ENCODE measurements at regions of chr1 and their contacts with region 1.

Region 1: DNA sequence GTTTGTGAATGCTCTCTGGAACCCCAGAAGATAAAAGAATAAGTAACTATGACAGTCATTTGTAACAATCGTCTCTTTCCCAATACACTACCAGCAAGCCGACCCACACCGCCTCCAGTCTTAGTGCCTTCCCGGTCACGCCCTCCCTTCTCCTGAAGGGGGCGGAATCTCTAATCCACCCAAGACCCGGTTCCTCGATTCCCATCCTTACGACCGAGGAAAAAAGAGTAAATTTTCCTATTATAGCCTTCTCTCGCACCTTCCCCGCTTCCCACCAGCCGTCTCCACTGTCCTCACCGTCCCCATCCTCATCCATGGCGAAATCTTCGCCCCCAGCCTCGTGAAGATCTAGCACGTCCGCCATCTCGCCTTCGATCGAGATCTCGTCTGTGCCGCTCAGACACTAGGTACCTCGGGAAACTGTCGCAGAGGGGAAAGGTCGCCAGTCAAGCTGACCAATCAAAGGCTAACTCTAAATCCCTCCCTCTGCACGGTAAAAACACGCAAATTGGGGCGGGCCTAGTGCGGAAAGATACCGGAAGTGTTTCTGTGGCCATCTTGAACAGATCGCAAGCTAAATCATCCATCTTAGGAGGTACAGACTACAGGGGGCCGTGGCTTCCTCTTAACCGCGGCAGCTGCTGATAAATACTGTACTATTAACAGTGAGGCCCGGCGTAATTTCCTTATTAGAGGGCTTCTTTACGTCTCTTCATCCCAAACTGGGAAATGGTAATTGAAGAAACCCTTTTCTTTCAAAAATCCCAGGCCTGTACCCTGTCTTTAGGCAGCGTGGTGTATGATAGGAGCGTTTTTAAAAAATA is at the start of gene RBM8A:
- DNase-seq: peak; percentile 97
- ATAC-seq: peak; percentile 98
- H3K4me3 Mint-ChIP-seq: no peak within 1 kb of the TSS
- H3K27ac Mint-ChIP-seq: no peak within 1 kb of the TSS
- H3K4me1 Mint-ChIP-seq: peaks cover 26% of the 10 kb centered on the region
- H3K27me3 Mint-ChIP-seq: no peaks in the 10 kb centered on the region
- CTCF ChIP-seq: peak; percentile 70
- total RNA-seq, gene RBM8A: 261 to 269 TPM

Region 2: GRCh38 chr1:145906954-145907753 is 20.1 kb before region 1 on chr1:
- CTCF ChIA-PET with region 1: interaction called, 15 read pairs
- POLR2A ChIA-PET with region 1: interaction called, 9 read pairs
- intact Hi-C with region 1: no loop called
- DNase-seq: no peak
- ATAC-seq: no peak
- H3K4me3 Mint-ChIP-seq: no peak overlapping the region
- H3K27ac Mint-ChIP-seq: no peak overlapping the region
- H3K4me1 Mint-ChIP-seq: peaks cover 5% of the 10 kb centered on the region
- H3K27me3 Mint-ChIP-seq: no peaks in the 10 kb centered on the region
- CTCF ChIP-seq: no peak

Region 3: DNA sequence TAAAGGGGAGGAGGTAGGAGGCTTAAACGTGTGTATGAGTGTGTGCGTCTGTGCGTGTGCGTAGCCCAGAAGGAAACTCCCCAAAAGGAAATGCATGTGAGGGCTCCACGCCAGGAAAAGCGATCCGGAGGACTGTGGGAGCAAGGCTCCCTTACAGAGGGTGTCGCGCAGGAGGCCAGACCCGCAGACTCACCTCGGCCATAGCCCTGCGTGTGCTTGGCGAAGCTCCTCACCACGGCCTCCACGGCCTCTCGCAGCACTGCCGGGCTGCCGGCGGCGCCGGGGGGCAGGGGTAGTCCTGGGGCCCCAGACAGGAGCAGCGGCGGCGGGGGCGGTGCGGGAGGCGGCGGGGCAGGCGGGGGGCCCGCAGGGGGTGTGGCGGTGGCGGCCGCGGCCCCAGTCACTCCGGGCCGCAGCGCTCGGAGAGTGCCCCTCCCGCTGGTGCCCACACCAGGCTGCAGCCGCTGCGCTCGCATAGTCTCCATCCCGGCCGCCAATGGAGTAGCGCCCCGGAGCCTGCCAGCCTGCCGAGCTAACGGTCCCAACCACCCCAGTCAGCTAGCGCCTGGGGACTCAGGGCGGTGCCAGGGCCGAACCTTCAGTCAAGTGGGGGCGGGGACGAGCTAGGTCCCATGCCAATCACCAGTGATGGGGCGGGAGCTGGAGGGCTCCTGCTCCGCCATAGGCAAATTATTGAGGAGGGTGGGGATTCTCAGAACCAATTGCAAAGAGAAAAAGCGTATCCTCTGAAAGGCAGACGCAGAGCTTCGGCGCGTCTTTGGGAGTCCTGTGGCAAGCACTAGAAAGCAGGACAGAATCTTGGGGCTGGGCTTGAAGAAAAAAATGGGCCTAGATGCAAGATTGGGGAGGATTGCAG is 30.4 kb after region 1 on chr1 and contains the start of gene LIX1L:
- CTCF ChIA-PET with region 1: interaction called, 19 read pairs
- POLR2A ChIA-PET with region 1: interaction called, 160 read pairs
- intact Hi-C with region 1: loop called (anchors 5 kb)
- DNase-seq: peak; percentile 98
- ATAC-seq: peak; percentile 89
- H3K4me3 Mint-ChIP-seq: peak within 1 kb of the TSS; percentile 83
- H3K27ac Mint-ChIP-seq: peak within 1 kb of the TSS; percentile 91
- H3K4me1 Mint-ChIP-seq: peaks cover 53% of the 10 kb centered on the region
- H3K27me3 Mint-ChIP-seq: no peaks in the 10 kb centered on the region
- CTCF ChIP-seq: no peak
- total RNA-seq, gene LIX1L: 41.5 to 43.6 TPM

Region 4: DNA sequence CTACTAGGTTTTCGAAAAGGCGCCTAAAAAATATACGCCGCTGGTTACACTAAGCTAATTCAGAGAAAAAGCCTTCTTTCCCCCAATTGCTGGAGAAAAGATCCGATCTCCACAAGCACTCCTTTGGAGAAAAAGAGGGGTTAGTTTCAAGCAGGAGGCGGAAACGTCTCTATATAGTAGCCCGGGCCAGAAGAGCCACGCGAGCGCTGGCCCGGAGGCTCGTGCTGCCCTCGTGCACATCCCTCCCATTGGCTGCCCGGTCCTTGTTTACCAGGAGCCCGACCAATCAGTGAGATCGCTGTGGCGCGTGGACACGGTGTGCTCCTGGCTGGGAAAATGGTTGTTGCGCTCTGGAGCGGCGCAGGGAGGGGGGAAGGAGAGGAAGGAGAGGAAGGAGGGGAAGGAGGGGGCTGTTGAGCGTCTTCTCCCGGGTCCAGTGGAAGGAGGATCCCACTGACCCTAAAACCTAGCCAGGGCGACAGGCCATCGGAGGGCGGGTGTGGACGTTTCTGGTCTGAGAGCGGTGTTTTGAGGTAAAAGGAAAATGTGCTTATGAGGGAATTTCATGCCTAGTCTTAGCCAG is 69.2 kb after region 1 on chr1 and contains the start of gene TXNIP:
- CTCF ChIA-PET with region 1: no interaction called
- POLR2A ChIA-PET with region 1: interaction called, 20 read pairs
- intact Hi-C with region 1: no loop called
- DNase-seq: peak; percentile 98
- ATAC-seq: peak; percentile 79
- H3K4me3 Mint-ChIP-seq: peak within 1 kb of the TSS; percentile 98
- H3K27ac Mint-ChIP-seq: peak within 1 kb of the TSS; percentile 100
- H3K4me1 Mint-ChIP-seq: peaks cover 61% of the 10 kb centered on the region
- H3K27me3 Mint-ChIP-seq: no peaks in the 10 kb centered on the region
- CTCF ChIP-seq: no peak
- total RNA-seq, gene TXNIP: 130 to 134 TPM

Measured in activated CD8-positive, alpha-beta T cell treated with anti-CD3 and anti-CD28 coated beads for 36 hours (primary cell).